HEK293T (cell line): ENCODE measurements at regions of chr9 and their contacts with region 1.

Region 1: DNA sequence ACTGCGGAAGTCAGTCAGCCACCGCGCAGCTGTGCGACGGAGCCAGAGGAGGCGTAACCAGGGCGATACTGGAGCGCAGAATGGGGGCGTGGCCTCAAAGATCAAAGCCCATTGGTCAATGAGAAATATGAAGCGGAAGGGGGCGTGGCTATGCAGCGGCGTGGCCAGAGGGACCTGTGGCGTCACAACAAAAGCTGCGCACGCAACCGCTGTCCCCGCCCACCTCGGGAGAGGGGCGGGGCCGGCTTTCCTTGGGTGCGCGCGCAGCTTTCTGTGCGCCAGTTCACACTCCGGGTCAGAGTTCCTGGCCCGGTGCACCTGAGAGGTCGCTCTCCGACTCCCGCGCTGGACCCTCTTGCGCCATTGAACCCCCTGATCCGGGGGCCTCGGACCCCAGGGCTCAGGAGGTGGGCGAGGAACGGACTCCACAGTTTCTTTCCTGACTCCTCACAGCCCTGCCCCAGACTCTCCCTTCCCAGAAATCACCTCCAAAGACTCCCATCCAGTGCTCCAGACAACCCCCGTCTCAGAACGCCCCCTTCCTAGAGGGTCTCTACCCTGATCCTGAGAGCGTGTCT is at the starts of genes GOLGA2 and SWI5:
- DNase-seq: peak; percentile 99

Region 2: DNA sequence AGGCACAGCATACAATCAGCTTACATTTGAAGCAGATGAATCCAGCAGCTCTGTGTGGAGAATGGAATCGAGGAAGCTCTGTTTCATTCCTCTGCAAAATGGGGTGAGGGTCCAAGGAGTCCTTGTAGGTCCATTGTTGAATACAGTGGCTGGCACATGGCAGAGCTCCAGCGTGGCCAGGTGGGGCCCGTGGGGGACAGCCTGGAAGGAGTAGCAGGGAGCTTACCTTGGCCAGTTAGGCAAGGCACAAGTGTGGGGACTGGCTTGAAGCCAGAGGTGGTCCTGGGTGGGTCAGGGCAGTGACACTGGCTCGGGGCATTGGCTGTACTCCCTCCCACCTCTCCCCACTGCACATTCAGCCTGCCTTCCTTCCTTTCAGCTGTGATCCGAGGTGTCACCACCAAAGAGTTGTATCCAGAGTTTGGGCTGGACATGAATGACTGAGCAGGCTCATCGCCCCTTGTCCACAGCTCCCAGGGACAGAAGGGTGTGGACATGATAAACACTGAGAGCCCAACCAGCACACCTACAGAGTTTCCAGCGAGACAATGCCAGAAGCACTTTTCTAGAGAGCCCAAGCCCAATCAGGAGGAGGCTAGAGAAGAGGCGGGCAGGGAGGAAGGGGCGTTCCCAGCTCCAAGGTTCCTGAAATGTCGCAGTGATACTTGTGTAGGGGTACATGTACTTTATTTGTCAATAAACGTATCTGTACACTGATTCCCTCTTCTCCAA is 12.4 kb after region 1 on chr9:
- CTCF ChIA-PET with region 1: no interaction called
- POLR2A ChIA-PET with region 1: interaction called, 11 read pairs
- DNase-seq: no peak